ENCODE measurements at regions of chrX and their contacts with region 1.

Region 1: GRCh38 chrX:64975989-64976672 is at the start of gene ZC4H2:
- DNase-seq: peak; percentile 81
- ATAC-seq: peak; percentile 99
- H3K4me3 Mint-ChIP-seq: peak within 1 kb of the TSS; percentile 92
- H3K27ac Mint-ChIP-seq: peak within 1 kb of the TSS; percentile 88
- H3K4me1 Mint-ChIP-seq: peaks cover 20% of the 10 kb centered on the region
- H3K27me3 Mint-ChIP-seq: no peaks in the 10 kb centered on the region
- CTCF ChIP-seq: no peak
- total RNA-seq, gene ZC4H2: 10.3 to 10.7 TPM

Region 2: DNA sequence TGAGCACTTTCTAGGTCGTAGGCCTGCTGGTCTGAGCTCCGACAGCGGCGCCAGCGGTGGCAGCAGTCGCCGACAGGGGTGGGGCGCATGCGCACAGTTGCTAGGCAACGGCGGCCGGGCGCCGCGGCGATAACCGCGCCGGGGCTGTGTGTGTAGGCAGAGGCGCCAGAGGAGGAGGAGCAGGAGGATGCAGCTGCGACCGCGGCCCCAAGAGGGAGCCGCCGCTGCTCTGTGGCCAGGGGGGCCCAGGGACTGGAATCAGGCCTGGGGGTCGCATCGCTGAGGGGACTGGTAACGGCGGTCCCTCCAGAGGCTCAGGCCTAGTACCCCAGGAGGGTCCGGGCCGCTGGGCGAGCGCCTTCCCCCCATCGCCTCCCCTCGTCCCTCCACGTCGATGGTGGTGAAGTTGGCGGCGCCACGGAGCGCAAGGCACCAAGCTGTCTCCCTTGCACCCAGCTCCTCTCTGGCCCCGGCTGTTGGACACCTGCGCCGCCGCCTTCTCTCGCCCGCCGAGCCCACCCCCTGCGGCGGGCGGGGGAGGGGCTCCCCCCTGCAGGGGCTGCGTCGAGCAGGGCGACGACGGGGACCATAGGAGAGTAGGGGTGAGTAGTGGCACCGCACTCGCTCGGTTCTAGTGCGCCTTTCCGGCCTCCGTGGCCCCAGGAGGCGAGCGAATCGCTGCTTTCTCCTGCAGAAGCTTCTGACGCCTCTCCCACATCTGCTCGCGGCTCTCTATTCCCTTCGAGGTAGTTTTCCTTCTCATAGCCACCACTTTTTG is 58.7 kb after region 1 on chrX:
- CTCF ChIA-PET with region 1: no interaction called
- POLR2A ChIA-PET with region 1: no interaction called
- intact Hi-C with region 1: loop called (anchors 10 kb)
- DNase-seq: peak; percentile 83
- ATAC-seq: peak; percentile 92
- H3K4me3 Mint-ChIP-seq: peak within 1 kb of the TSS; percentile 88
- H3K27ac Mint-ChIP-seq: peak within 1 kb of the TSS; percentile 94
- H3K4me1 Mint-ChIP-seq: peaks cover 32% of the 10 kb centered on the region
- H3K27me3 Mint-ChIP-seq: no peaks in the 10 kb centered on the region
- CTCF ChIP-seq: peak; percentile 65